Prostate gland (tissue), 2 donors: ENCODE measurements at regions of chr2 and their contacts with region 1.

Region 1: GRCh38 chr2:69012310-69013141 is 453 bp upstream of the ANTXR1 start:
- DNase-seq: peak; percentile 51
- H3K4me3 ChIP-seq: peak overlapping the region; percentile 46 to 48
- H3K27ac ChIP-seq: peak overlapping the region; percentile 51 to 73
- H3K4me1 ChIP-seq: no peaks in the 10 kb centered on the region
- H3K27me3 ChIP-seq: no peaks in the 10 kb centered on the region
- CTCF ChIP-seq: peak; percentile 65 to 77 (median 76)
- POLR2A ChIP-seq: no peak

Region 2: DNA sequence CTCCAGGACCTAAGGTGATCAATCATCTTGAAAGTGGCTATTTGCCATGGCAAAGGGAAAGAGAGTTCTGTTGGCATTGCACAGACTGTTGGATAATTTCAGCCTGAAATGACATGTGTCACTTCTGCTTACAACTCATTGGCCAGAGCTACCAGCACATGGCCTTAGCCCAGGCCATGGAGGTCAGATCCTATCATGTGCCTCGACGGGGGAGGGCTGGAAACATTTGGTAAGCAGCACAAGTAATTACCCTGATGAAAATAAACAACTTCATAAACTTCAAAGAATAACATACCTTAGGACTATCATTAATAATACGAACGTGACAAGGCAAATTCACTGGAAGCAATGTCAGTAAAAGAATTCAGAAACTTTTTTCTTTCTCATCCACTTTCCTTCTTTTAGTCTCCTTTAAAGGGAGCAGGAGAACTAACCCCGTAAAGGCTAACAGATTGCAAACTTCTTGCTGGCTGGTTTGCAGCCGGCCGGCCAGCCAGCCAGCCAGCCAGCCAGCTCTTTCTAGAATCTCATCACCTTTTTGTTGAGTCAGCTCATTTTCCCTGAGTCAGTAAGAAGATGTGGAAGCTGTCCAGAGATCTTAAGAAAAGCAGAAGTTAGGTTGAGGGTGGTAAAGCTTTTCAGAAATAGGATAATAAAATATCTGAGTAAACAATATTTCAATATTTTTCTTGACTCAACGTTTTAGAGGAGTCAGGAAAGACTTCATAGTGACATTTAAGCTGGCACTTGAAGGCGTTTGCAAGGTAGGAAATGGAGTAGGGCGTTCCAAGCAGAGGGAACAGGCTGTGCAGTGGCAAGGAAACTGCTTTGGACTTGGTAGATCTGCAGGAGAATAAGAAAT is 724.7 kb before region 1 on chr2:
- intact Hi-C with region 1: no loop called
- DNase-seq: peak; percentile 57
- H3K4me3 ChIP-seq: no peak overlapping the region
- H3K27ac ChIP-seq: peak overlapping the region; percentile 45 to 52
- H3K4me1 ChIP-seq: peaks cover 4% of the 10 kb centered on the region
- H3K27me3 ChIP-seq: no peaks in the 10 kb centered on the region
- CTCF ChIP-seq: no peak
- POLR2A ChIP-seq: no peak

Region 3: DNA sequence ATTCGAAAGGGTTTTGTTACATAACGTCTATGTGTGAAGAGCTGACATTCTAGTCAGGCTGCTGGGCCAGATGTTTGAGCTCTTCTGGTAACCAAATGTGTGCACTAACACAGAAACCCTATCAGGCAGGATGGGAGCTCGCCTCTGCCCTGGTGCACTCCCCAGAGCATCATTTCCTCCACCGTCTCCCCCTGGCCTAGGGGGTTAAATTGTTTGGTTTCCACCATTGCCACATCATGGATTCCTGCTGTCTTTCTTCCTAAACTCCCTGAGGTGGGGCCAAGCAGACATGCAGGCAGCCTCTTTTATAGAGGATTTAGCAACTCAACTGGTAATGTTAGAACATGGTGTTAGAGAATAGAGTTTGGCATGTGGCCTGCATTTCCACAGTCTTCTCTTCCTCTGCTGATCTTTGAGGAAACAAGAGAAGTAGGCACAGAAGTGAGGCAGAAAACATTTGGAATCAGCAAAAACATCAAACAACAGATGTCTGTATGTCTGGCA is 87.7 kb after region 1 on chr2:
- intact Hi-C with region 1: loop called (anchors 10 kb)
- DNase-seq: no peak
- H3K4me3 ChIP-seq: no peak overlapping the region
- H3K27ac ChIP-seq: no peak overlapping the region
- H3K4me1 ChIP-seq: no peaks in the 10 kb centered on the region
- H3K27me3 ChIP-seq: no peaks in the 10 kb centered on the region
- CTCF ChIP-seq: no peak
- POLR2A ChIP-seq: no peak

Region 4: GRCh38 chr2:69306822-69307578 is 294.5 kb after region 1 on chr2:
- intact Hi-C with region 1: loop called (anchors 1 kb)
- DNase-seq: peak; percentile 60
- H3K4me3 ChIP-seq: peak overlapping the region; percentile 42 to 46
- H3K27ac ChIP-seq: peak overlapping the region; percentile 58 to 70
- H3K4me1 ChIP-seq: peaks cover 21% of the 10 kb centered on the region
- H3K27me3 ChIP-seq: no peaks in the 10 kb centered on the region
- CTCF ChIP-seq: peak; percentile 71 to 80 (median 76)
- POLR2A ChIP-seq: no peak

Region 5: DNA sequence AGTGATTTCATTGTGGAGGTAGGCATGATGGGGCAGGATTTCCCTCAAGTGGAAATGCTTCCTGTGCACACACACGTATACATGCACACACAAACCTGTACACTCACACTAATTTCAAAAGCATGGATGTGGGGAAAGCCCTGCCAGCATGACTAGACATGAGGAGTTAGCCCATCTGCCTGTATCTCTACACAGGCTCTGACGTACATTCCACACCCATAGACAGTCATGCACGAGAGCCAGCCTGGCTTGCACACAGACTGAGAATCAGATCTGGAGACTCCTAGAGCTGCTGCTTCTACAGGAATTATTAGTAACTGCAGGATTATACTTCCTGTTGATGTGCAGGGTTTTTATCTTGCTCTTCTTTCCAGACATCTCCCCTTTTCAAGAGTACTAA is 452.0 kb after region 1 on chr2:
- intact Hi-C with region 1: no loop called
- DNase-seq: no peak
- H3K4me3 ChIP-seq: no peak overlapping the region
- H3K27ac ChIP-seq: no peak overlapping the region
- H3K4me1 ChIP-seq: no peaks in the 10 kb centered on the region
- H3K27me3 ChIP-seq: no peaks in the 10 kb centered on the region
- CTCF ChIP-seq: no peak
- POLR2A ChIP-seq: no peak

Region 6: GRCh38 chr2:69643602-69644505 is 631.3 kb after region 1 on chr2 and contains the start of gene AAK1:
- intact Hi-C with region 1: loop called (anchors 10 kb)
- DNase-seq: peak; percentile 90
- H3K4me3 ChIP-seq: peak within 1 kb of the TSS; percentile 90 to 94
- H3K27ac ChIP-seq: peak within 1 kb of the TSS; percentile 97
- H3K4me1 ChIP-seq: peaks cover 7% of the 10 kb centered on the region
- H3K27me3 ChIP-seq: no peaks in the 10 kb centered on the region
- CTCF ChIP-seq: peak in 2 of 4 experiments; percentile 14 to 15
- POLR2A ChIP-seq: peak; percentile 81
- total RNA-seq, gene AAK1: 70.7 to 77.3 TPM